ENCODE measurements at regions of chr4 and their contacts with region 1.

Region 1: DNA sequence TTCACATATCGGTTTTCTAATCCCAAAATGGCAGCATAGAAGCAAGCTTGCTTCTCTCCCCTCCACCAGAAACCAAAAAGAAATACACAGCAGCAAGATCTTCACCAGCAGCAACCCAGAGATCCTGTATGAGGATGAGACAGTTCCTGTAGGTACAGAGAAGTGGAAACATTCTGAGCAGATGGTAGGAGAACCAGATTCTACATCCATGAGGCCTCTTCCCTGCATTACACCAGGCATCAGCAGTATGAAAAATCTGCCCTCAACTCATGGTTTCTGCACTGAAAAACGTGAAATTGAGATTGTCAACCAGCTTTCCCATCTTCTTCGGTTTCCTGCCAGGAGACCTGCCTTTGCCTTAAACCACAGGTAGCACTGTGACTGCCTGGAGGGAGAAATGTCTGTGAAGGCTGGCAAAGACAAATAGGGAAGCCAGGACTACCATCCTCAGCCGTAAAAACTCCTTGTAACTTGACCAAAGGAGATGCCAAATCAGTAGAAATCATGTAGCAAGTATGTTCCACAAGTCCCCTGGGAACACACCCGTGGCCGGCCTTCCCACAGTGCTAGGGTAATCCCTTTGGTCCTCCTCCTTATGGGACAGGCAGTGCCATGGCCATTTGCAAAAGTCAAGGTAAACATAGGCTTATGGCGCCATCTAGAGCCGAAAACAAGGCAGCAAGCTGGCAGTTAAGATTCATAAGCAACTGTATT is 24.0 kb upstream of the MTHFD2L start:
- DNase-seq: no peak
- ATAC-seq: no peak
- H3K4me3 Mint-ChIP-seq: no peak overlapping the region
- H3K27ac Mint-ChIP-seq: no peak overlapping the region
- H3K4me1 Mint-ChIP-seq: no peaks in the 10 kb centered on the region
- H3K27me3 Mint-ChIP-seq: peaks cover 20% of the 10 kb centered on the region
- CTCF ChIP-seq: no peak

Region 2: DNA sequence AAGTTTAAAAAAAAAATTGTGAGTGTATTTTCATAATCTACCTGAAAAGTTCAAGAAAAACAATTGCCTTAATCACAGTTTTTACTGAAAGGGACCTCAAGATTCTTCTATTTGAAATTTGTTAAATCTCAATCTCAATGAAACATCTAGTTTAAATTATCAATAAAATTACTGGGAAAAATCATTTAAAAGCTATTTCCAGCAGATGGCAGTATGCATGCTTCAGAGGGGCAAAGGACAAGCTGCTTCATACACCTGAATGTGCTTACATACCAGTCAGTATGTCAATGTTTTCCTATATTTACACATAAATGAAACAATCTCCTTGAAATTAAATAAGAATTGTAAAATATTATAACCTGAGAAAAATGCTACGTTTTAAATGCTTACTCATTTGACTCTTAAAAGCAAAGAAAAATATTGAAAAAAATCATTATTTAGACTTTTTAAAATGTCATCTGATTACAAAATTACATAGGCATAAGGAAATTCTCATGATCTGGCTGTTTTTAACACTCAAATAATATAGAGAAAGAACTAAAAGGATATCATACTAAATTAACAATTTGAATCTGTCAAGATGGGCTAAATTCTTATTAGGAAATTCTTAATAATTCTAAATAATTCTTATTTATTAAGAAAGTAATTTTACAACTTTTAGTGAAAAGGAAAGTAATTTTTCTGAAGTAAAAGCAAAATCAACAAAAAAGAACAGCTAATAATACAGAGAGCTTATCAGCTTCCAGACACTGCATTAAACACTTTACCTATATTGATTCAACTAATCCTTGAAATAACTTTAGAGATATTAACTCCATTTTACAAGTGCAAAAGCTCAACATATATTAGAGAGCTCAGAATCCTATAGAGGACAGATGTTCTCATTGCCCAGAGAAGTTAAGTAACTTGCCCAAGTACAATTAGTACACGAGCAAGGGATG is 1807.0 kb before region 1 on chr4:
- CTCF ChIA-PET with region 1: no interaction called
- POLR2A ChIA-PET with region 1: no interaction called
- intact Hi-C with region 1: loop called (anchors 2 kb)
- DNase-seq: no peak
- ATAC-seq: no peak
- H3K4me3 Mint-ChIP-seq: no peak overlapping the region
- H3K27ac Mint-ChIP-seq: no peak overlapping the region
- H3K4me1 Mint-ChIP-seq: no peaks in the 10 kb centered on the region
- H3K27me3 Mint-ChIP-seq: peaks cover 8% of the 10 kb centered on the region
- CTCF ChIP-seq: no peak

Region 3: GRCh38 chr4:73311428-73311827 is 822.5 kb before region 1 on chr4:
- CTCF ChIA-PET with region 1: no interaction called
- POLR2A ChIA-PET with region 1: no interaction called
- intact Hi-C with region 1: loop called (anchors 1 kb)
- DNase-seq: no peak
- ATAC-seq: no peak
- H3K4me3 Mint-ChIP-seq: no peak overlapping the region
- H3K27ac Mint-ChIP-seq: no peak overlapping the region
- H3K4me1 Mint-ChIP-seq: no peaks in the 10 kb centered on the region
- H3K27me3 Mint-ChIP-seq: no peaks in the 10 kb centered on the region
- CTCF ChIP-seq: no peak

Region 4: GRCh38 chr4:73573794-73574406 is 560.0 kb before region 1 on chr4:
- CTCF ChIA-PET with region 1: interaction called, 4 read pairs
- POLR2A ChIA-PET with region 1: no interaction called
- intact Hi-C with region 1: loop called (anchors 1 kb)
- DNase-seq: peak; percentile 17
- ATAC-seq: peak; percentile 66
- H3K4me3 Mint-ChIP-seq: no peak overlapping the region
- H3K27ac Mint-ChIP-seq: no peak overlapping the region
- H3K4me1 Mint-ChIP-seq: no peaks in the 10 kb centered on the region
- H3K27me3 Mint-ChIP-seq: peaks cover 3% of the 10 kb centered on the region
- CTCF ChIP-seq: no peak

Region 5: GRCh38 chr4:73662709-73663546 is 471.0 kb before region 1 on chr4:
- CTCF ChIA-PET with region 1: no interaction called
- POLR2A ChIA-PET with region 1: no interaction called
- intact Hi-C with region 1: loop called (anchors 2 kb)
- DNase-seq: no peak
- ATAC-seq: no peak
- H3K4me3 Mint-ChIP-seq: no peak overlapping the region
- H3K27ac Mint-ChIP-seq: no peak overlapping the region
- H3K4me1 Mint-ChIP-seq: no peaks in the 10 kb centered on the region
- H3K27me3 Mint-ChIP-seq: no peaks in the 10 kb centered on the region
- CTCF ChIP-seq: no peak

Region 6: GRCh38 chr4:74157561-74158465 is 23.9 kb after region 1 on chr4 and contains the start of gene MTHFD2L:
- CTCF ChIA-PET with region 1: no interaction called
- POLR2A ChIA-PET with region 1: no interaction called
- intact Hi-C with region 1: no loop called
- DNase-seq: peak; percentile 83
- ATAC-seq: peak; percentile 97
- H3K4me3 Mint-ChIP-seq: peak within 1 kb of the TSS; percentile 92
- H3K27ac Mint-ChIP-seq: peak within 1 kb of the TSS; percentile 80
- H3K4me1 Mint-ChIP-seq: peaks cover 18% of the 10 kb centered on the region
- H3K27me3 Mint-ChIP-seq: peaks cover 6% of the 10 kb centered on the region
- CTCF ChIP-seq: no peak
- total RNA-seq, gene MTHFD2L: 12.0 and 14.3 TPM in 2 replicates

Measured in activated B cell treated with CpG ODN at 0.5 μM for 24 hours (primary cell).